Pancreas (tissue), 10 donors: ENCODE measurements at regions of chr20 and their contacts with region 1.

Region 1: GRCh38 chr20:21235484-21236445 is 67.4 kb upstream of the XRN2 start:
- DNase-seq: peak; percentile 24 to 85 (median 59)
- ATAC-seq: peak; percentile 77 to 98 (median 94)
- H3K4me3 ChIP-seq: no peak overlapping the region
- H3K27ac ChIP-seq: no peak overlapping the region
- H3K4me1 ChIP-seq: no peaks in the 10 kb centered on the region
- H3K27me3 ChIP-seq: no peaks in the 10 kb centered on the region
- CTCF ChIP-seq: peak; percentile 36 to 73 (median 58)

Region 2: DNA sequence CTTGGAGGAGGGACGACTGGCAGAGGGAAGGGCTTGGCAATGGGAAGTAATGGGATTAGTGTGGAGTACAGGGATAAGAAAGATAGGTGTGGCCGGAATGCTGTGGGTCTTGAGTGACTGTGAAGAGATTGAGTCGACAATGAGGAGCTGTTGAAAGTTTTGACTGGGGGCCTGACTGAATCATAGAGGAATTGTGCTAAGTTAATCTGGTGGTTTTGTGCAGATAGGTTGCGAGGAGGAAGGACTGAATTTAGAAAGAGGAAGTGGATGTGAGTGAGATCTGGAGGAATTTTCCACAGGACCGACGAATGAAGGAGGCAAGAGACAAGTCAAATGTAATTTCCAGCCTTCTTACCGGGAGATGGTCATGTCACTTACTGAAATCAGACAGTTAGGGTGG is 379.5 kb before region 1 on chr20:
- intact Hi-C with region 1: loop called in 1 of 3 experiments (anchors 10 kb)
- DNase-seq: no peak
- ATAC-seq: no peak
- H3K4me3 ChIP-seq: no peak overlapping the region
- H3K27ac ChIP-seq: no peak overlapping the region
- H3K4me1 ChIP-seq: no peaks in the 10 kb centered on the region
- H3K27me3 ChIP-seq: no peaks in the 10 kb centered on the region
- CTCF ChIP-seq: no peak

Region 3: DNA sequence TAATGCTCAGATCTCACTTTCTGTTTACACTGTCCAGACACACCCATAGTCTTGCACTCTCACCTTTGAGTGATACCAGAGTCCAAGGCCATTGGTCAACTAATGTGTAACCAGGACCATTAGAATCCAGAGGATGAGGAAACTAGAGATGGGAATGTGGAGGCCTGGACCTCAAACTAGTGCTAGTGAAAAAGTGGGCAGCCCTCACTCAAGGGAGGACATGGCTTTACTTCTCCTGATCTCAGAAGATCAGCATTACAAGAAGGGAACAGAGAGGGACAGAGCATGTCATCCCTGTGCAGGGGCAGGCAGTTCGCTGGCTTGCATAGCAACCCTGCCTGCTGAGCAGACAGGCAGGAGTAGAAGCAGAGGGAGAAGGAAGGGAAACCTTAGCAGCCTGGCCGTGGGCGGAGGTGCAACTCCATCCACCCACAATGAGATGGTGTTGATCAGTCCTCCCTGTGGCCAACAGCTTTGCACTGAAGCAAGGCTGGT is 44.8 kb after region 1 on chr20:
- intact Hi-C with region 1: no loop called
- DNase-seq: no peak
- ATAC-seq: no peak
- H3K4me3 ChIP-seq: no peak overlapping the region
- H3K27ac ChIP-seq: no peak overlapping the region
- H3K4me1 ChIP-seq: no peaks in the 10 kb centered on the region
- H3K27me3 ChIP-seq: no peaks in the 10 kb centered on the region
- CTCF ChIP-seq: no peak

Region 4: DNA sequence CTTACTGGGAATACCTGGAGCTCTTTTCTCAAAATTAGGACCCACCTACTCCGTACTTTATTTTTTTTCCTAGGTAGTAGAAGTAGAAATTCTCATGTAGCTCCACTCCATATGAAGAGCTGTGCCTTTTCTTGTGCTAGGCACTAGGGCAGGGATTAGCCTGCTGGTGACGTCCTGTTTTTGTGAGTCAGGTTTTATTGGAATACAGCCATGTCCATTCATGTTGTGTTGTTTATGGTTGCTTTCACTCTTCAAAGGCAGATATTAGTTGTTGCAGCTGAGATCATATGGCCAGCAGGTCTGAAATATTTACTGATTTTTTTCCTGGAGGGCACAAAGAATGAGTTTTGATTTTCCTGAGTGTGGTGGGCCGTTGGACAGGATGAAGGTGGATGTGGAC is 87.9 kb after region 1 on chr20:
- intact Hi-C with region 1: no loop called
- DNase-seq: no peak
- ATAC-seq: peak in 3 of 4 donors; percentile 39 to 60 (median 46)
- H3K4me3 ChIP-seq: no peak overlapping the region
- H3K27ac ChIP-seq: no peak overlapping the region
- H3K4me1 ChIP-seq: peaks cover 18 to 24% (median 22%) of the 10 kb centered on the region in 3 donors
- H3K27me3 ChIP-seq: no peaks in the 10 kb centered on the region
- CTCF ChIP-seq: no peak

Region 5: DNA sequence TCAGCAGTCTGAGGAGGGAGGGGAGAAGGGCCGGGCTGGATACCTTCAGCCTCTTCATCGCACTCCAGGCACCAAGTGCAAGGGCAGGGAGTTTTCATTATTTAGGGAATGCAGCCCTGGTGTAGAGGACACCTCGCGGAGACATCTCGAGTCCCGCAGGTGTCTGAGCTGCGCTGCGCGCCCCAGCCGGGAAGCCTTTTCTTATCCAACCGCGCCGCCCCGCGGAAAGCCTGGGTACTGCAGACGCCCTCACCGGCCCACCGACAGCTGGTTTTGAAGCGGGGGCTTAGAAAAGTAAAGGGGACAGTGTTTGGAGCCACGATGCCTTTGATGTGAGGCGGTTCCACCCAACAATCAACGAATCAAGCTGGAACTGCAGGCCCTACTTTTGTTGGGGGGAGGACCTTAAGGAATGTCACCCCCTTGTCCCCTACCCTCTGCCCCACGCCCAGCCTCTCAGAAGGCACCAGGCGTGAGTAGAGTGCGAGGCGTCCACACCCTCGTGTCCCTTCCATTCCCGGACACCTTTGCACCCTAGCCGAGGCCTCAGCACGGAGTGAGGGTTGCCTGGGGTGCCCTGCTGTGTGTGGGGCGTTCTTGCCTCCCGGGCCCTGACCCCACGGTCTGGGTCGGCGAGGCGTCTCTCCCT is 269.5 kb after region 1 on chr20:
- intact Hi-C with region 1: loop called (anchors 5 to 10 kb)
- DNase-seq: peak in 5 of 6 donors; percentile 38 to 96 (median 76)
- ATAC-seq: peak; percentile 75 to 87 (median 76)
- H3K4me3 ChIP-seq: peak overlapping the region in 1 of 4 donors; percentile 47
- H3K27ac ChIP-seq: no peak overlapping the region
- H3K4me1 ChIP-seq: peaks cover 0 to 11% (median 0%) of the 10 kb centered on the region in 3 donors
- H3K27me3 ChIP-seq: peaks cover 0 to 42% (median 3%) of the 10 kb centered on the region in 4 donors
- CTCF ChIP-seq: peak; percentile 90 to 92 (median 91)

Region 6: DNA sequence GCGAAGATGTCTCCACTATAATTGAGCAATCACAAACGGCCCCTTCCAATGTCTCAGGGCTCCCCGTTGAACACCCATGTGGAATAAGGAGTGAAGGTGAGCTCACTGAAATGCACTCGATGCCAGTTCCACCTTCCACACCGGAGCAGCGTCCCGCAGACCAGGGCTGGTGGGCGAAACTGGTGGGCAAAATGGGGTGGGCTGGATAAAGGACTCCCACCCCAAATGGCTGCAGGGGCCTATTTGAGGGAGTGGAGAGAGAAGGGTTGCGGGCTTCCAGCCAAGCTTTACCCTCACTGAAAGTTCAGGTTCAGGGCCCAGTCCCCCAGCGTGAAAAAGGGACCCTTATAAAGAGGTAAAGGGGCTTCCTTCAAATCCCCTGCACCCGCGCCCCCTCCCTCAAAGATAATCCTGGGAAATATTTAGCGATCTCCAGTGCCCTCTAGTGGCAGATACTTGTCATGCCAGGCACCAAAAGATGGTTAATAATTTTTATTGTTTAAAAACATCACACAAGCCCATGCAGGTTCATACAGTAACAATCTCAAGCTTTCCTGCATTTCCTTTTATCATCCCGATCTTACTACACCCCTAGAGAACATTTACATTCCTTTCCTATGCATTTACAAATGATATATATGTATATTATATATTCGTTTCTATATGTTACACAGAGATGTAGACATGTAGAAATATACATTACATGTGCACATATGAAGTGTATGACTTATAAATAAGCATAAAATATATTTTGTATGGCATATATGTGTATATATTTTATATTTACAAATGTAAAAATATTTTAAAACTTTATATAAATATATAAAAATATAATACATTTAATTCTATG is 336.3 kb after region 1 on chr20:
- intact Hi-C with region 1: loop called in 1 of 3 experiments (anchors 10 kb)
- DNase-seq: peak in 1 of 6 donors; percentile 9
- ATAC-seq: peak in 3 of 4 donors; percentile 42 to 66 (median 47)
- H3K4me3 ChIP-seq: no peak overlapping the region
- H3K27ac ChIP-seq: no peak overlapping the region
- H3K4me1 ChIP-seq: no peaks in the 10 kb centered on the region
- H3K27me3 ChIP-seq: peaks cover 0 to 14% (median 6%) of the 10 kb centered on the region in 4 donors
- CTCF ChIP-seq: peak; percentile 60 to 85 (median 82)

Region 7: DNA sequence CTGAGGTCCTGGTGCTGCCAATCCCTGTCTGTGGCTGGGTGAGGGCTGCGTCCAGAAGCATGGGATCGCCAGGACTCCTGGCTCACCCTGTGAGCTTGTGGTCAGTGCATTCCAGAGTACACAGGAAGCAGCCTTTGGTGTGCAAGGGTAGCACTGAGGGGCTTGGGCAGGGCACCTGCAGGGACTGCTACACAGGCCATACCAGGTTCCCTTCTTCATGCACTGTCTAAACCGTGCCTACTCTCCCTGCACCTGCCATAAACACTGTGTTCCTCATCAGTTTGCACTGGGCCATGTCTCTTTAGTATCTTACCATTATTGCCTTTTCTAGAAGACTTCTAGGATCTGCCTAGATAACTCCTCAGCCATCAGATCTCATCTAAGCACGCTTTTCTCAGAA is 350.9 kb after region 1 on chr20:
- intact Hi-C with region 1: loop called in 1 of 3 experiments (anchors 5 kb)
- DNase-seq: no peak
- ATAC-seq: no peak
- H3K4me3 ChIP-seq: no peak overlapping the region
- H3K27ac ChIP-seq: no peak overlapping the region
- H3K4me1 ChIP-seq: no peaks in the 10 kb centered on the region
- H3K27me3 ChIP-seq: no peaks in the 10 kb centered on the region
- CTCF ChIP-seq: no peak